CD4-positive, alpha-beta T cell (primary cell): ENCODE measurements at regions of chr4 and their contacts with region 1.

Region 1: GRCh38 chr4:103099691-103100392 is at the start of gene BDH2:
- DNase-seq: peak in 10 of 14 experiments; percentile 7 to 92 (median 36)
- ATAC-seq: peak; percentile 99
- H3K4me3 ChIP-seq: peak within 1 kb of the TSS; percentile 52
- H3K4me3 Mint-ChIP-seq: peak within 1 kb of the TSS; percentile 92
- H3K27ac ChIP-seq: no peak within 1 kb of the TSS
- H3K27ac Mint-ChIP-seq: peak within 1 kb of the TSS; percentile 79
- H3K4me1 ChIP-seq: peaks cover 14% of the 10 kb centered on the region
- H3K4me1 Mint-ChIP-seq: peaks cover 33% of the 10 kb centered on the region
- H3K27me3 ChIP-seq: no peaks in the 10 kb centered on the region
- H3K27me3 Mint-ChIP-seq: no peaks in the 10 kb centered on the region
- CTCF ChIP-seq: peak; percentile 82
- total RNA-seq, gene BDH2: 9.9 to 10.3 TPM

Region 2: DNA sequence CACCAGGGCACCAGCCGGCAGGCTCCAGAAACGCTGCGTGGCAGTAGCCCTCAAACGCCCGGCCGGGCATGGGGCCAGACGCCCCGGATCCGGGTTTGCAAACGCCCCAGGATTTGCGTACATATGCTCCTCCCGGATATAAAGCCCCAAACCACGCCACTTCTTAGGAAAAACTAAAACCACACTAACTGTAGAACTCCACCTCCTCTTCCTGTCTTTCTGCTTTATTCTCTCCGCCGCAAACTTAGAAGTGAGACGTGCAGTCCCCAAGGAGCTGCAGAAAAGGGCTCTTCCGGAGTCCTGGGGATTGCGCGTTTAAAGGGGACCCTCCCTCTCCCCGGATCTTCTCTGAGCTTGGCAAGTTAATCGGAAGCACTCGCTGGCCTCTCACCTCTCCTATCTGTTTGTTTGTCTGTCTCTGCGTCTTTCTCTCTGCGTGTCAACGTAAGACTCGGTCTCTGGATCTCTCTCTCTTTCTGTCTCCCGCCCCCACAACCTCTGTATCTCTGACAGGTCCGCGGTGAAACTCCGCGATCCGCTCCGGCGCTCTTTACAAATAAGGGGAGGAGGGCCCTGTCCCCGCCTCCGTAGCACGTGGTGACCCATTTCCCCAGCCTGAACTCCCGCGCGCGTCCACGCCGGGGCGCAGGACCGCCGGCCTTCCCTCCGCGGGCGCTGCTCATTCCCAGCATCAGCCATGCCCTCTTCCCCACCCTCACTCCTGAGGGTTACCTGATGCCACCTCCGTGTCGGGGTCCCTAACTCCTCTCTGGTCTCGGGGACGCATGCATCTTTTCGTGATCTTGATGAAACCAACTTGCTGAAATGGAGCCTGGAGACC is 754.7 kb before region 1 on chr4 and contains the start of gene SLC39A8:
- CTCF ChIA-PET with region 1: no interaction called
- POLR2A ChIA-PET with region 1: no interaction called
- intact Hi-C with region 1: loop called (anchors 1 to 5 kb)
- DNase-seq: peak; percentile 71 to 95 (median 81)
- ATAC-seq: peak; percentile 80
- H3K4me3 ChIP-seq: peak within 1 kb of the TSS; percentile 82
- H3K4me3 Mint-ChIP-seq: peak within 1 kb of the TSS; percentile 87
- H3K27ac ChIP-seq: peak within 1 kb of the TSS; percentile 88 to 93
- H3K27ac Mint-ChIP-seq: peak within 1 kb of the TSS; percentile 88
- H3K4me1 ChIP-seq: peaks cover 25% of the 10 kb centered on the region
- H3K4me1 Mint-ChIP-seq: peaks cover 47% of the 10 kb centered on the region
- H3K27me3 ChIP-seq: no peaks in the 10 kb centered on the region
- H3K27me3 Mint-ChIP-seq: no peaks in the 10 kb centered on the region
- CTCF ChIP-seq: peak; percentile 95
- total RNA-seq, gene SLC39A8: 17.9 to 18.0 TPM

Region 3: GRCh38 chr4:102449751-102450352 is 650.0 kb before region 1 on chr4:
- CTCF ChIA-PET with region 1: no interaction called
- POLR2A ChIA-PET with region 1: no interaction called
- intact Hi-C with region 1: loop called (anchors 2 to 5 kb)
- DNase-seq: peak in 13 of 14 experiments; percentile 14 to 84 (median 36)
- ATAC-seq: peak; percentile 78
- H3K4me3 ChIP-seq: no peak overlapping the region
- H3K4me3 Mint-ChIP-seq: no peak overlapping the region
- H3K27ac ChIP-seq: no peak overlapping the region
- H3K27ac Mint-ChIP-seq: no peak overlapping the region
- H3K4me1 ChIP-seq: no peaks in the 10 kb centered on the region
- H3K4me1 Mint-ChIP-seq: peaks cover 12% of the 10 kb centered on the region
- H3K27me3 ChIP-seq: no peaks in the 10 kb centered on the region
- H3K27me3 Mint-ChIP-seq: no peaks in the 10 kb centered on the region
- CTCF ChIP-seq: peak; percentile 87

Region 4: GRCh38 chr4:103019308-103020124 is 80.3 kb before region 1 on chr4 and contains the start of gene SLC9B1:
- CTCF ChIA-PET with region 1: no interaction called
- POLR2A ChIA-PET with region 1: interaction called, 5 read pairs
- intact Hi-C with region 1: loop called in 1 of 2 experiments (anchors 5 kb)
- DNase-seq: peak; percentile 84 to 96 (median 91)
- ATAC-seq: peak; percentile 89
- H3K4me3 ChIP-seq: peak within 1 kb of the TSS; percentile 64
- H3K4me3 Mint-ChIP-seq: peak within 1 kb of the TSS; percentile 91
- H3K27ac ChIP-seq: peak within 1 kb of the TSS; percentile 65 to 94
- H3K27ac Mint-ChIP-seq: peak within 1 kb of the TSS; percentile 99
- H3K4me1 ChIP-seq: peaks cover 22% of the 10 kb centered on the region
- H3K4me1 Mint-ChIP-seq: peaks cover 25% of the 10 kb centered on the region
- H3K27me3 ChIP-seq: no peaks in the 10 kb centered on the region
- H3K27me3 Mint-ChIP-seq: no peaks in the 10 kb centered on the region
- CTCF ChIP-seq: no peak
- total RNA-seq, gene SLC9B1: 3.6 to 3.7 TPM

Region 5: GRCh38 chr4:103075901-103076739 is 23.7 kb before region 1 on chr4:
- CTCF ChIA-PET with region 1: interaction called, 11 read pairs
- POLR2A ChIA-PET with region 1: interaction called, 15 read pairs
- intact Hi-C with region 1: no loop called
- DNase-seq: peak; percentile 43 to 80 (median 58)
- ATAC-seq: peak; percentile 81
- H3K4me3 ChIP-seq: peak overlapping the region; percentile 81
- H3K4me3 Mint-ChIP-seq: peak overlapping the region; percentile 88
- H3K27ac ChIP-seq: peak overlapping the region; percentile 78 to 88
- H3K27ac Mint-ChIP-seq: peak overlapping the region; percentile 94
- H3K4me1 ChIP-seq: peaks cover 17% of the 10 kb centered on the region
- H3K4me1 Mint-ChIP-seq: peaks cover 59% of the 10 kb centered on the region
- H3K27me3 ChIP-seq: no peaks in the 10 kb centered on the region
- H3K27me3 Mint-ChIP-seq: no peaks in the 10 kb centered on the region
- CTCF ChIP-seq: no peak